Endothelial cell of umbilical vein (primary cell): ENCODE measurements at regions of chr2 and their contacts with region 1.

Region 1: DNA sequence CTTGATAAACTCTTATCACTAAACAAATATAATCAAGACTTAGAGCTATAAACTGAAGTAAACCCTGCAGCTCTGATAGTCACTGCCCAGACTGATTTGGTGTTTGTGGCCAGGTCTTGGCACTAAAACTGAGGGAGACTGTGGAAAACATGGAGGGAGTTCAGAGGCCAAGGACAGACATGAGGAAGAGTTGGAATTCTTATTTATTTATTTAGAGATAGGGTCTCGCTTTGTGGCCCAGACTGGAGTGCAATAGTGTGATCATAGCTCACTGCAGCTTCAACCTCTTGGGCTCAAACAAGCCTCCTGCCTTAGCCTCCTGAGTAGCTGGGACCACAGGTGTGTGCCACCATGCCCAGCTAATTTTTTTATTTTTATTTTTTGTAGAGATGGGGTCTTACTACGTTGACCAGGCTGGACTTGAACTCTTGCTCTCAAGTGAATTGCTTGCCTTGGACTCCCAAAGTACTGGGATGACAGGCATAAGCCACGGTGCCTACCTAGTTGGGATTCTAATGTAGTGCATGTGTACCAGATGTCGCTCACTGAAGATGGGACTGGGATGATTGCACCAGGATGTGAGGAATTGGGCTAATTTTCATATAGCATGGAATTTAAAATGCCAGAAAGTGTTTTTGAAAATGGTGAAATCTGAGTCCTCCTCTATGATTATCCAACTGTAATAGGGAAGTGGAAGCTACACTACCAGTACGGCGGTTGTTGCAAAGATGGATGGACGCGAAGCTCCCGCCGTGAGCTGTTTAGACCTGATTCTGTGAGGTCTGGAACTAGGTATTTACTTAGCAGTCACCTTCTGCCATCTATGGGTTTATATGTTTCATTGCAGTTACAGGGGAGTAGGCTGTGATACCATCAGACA is 52.7 kb upstream of the CTLA4 start:
- DNase-seq: peak; percentile 78
- H3K4me3 ChIP-seq: no peak overlapping the region
- H3K27ac ChIP-seq: no peak overlapping the region
- H3K4me1 ChIP-seq: peaks cover 38% of the 10 kb centered on the region
- H3K27me3 ChIP-seq: peaks cover 3 to 5% of the 10 kb centered on the region in 2 experiments
- CTCF ChIP-seq: peak; percentile 52 to 68
- POLR2A ChIP-seq: no peak

Region 2: DNA sequence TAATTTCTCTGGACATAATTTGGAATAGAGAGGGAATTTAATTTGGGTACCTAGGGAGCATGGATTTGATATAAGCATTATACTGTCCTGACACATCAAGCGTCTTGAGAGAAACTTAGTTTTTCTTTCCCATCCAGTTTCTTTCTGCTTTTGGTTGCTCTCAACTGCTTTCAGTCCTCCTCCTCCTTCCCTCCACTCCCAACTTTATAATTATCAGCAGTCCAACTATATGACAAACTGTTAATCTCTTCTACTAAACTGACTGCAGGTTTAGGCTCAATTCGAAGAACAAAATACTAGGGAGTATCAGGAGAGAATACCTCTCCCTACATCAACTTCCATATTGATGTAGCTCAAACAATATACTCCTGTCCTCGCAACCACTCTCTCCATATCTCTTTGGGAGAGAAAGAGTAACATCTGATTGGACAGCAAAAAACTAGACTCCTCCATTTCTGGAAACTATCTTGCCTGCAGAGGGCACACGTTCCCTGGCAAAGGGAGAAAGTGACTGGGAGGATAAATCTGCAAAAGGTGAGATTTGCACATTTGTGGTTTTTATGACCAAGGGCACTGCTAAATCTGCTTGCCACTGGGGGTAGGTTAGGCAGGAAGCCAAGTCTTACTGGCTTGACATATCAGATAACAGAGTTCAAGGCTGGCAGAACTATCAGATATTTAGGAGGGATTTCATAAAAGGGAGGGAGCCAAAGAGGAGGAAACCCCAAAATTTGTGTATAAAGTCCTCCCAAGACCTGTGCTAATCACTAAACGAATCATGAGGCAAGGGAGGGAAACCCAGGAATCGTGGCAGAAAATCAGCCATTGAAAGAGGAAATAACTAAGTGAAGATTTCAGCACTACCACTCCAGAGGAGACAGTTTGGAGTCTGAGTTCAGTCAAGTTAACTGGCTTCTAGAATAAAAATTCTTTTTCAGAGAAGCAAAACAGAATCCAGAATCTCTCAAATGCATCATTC is 983.4 kb before region 1 on chr2:
- CTCF ChIA-PET with region 1: interaction called, 8 read pairs
- POLR2A ChIA-PET with region 1: no interaction called
- dilution Hi-C with region 1: no loop called
- intact Hi-C with region 1: loop called (anchors 2 kb)
- DNase-seq: peak; percentile 75
- H3K4me3 ChIP-seq: no peak overlapping the region
- H3K27ac ChIP-seq: no peak overlapping the region
- H3K4me1 ChIP-seq: peaks cover 15% of the 10 kb centered on the region
- H3K27me3 ChIP-seq: no peaks in the 10 kb centered on the region
- CTCF ChIP-seq: peak; percentile 56 to 61
- POLR2A ChIP-seq: no peak

Region 3: GRCh38 chr2:203280428-203281064 is 534.4 kb before region 1 on chr2:
- CTCF ChIA-PET with region 1: interaction called, 14 read pairs
- POLR2A ChIA-PET with region 1: no interaction called
- dilution Hi-C with region 1: no loop called
- intact Hi-C with region 1: loop called (anchors 1 kb)
- DNase-seq: peak; percentile 96
- H3K4me3 ChIP-seq: no peak overlapping the region
- H3K27ac ChIP-seq: peak overlapping the region; percentile 20
- H3K4me1 ChIP-seq: peaks cover 17% of the 10 kb centered on the region
- H3K27me3 ChIP-seq: no peaks in the 10 kb centered on the region
- CTCF ChIP-seq: no peak
- POLR2A ChIP-seq: no peak

Region 4: DNA sequence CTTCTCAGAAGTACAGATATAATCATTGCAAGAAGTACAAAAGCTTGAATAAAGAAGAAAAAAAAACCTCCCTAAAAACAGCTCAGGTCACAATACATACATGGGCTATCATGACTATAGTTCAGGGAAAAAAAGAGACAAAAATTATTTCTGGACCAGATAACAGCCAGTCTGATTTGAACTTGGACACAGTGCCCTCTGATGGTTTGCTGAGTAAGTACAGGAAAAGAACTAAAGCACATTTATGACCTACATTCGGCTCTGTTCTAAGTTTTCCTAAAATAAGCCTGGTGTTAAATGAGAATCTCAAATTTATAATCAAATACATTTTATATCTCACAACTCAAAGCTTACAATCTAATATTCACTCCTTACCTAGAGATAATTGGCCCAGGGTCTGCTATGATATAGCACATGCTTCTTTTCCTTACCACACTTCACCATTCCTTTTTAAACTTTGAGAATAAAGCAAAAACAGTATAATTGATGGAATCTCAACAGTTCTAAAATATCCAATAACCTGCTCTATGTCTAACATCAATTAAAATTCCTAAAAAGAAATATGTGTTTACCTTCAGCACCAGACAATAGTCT is 360.9 kb before region 1 on chr2:
- CTCF ChIA-PET with region 1: interaction called, 27 read pairs
- POLR2A ChIA-PET with region 1: no interaction called
- dilution Hi-C with region 1: no loop called
- intact Hi-C with region 1: loop called (anchors 1 kb)
- DNase-seq: peak; percentile 67
- H3K4me3 ChIP-seq: no peak overlapping the region
- H3K27ac ChIP-seq: no peak overlapping the region
- H3K4me1 ChIP-seq: no peaks in the 10 kb centered on the region
- H3K27me3 ChIP-seq: no peaks in the 10 kb centered on the region
- CTCF ChIP-seq: peak; percentile 49 to 58
- POLR2A ChIP-seq: no peak

Region 5: GRCh38 chr2:203484266-203485112 is 330.4 kb before region 1 on chr2:
- CTCF ChIA-PET with region 1: interaction called, 38 read pairs
- POLR2A ChIA-PET with region 1: no interaction called
- dilution Hi-C with region 1: no loop called
- intact Hi-C with region 1: loop called (anchors 1 kb)
- DNase-seq: peak; percentile 45
- H3K4me3 ChIP-seq: no peak overlapping the region
- H3K27ac ChIP-seq: no peak overlapping the region
- H3K4me1 ChIP-seq: no peaks in the 10 kb centered on the region
- H3K27me3 ChIP-seq: no peaks in the 10 kb centered on the region
- CTCF ChIP-seq: peak; percentile 23 to 51
- POLR2A ChIP-seq: no peak

Region 6: GRCh38 chr2:203650860-203651613 is 163.9 kb before region 1 on chr2:
- CTCF ChIA-PET with region 1: interaction called, 5 read pairs
- POLR2A ChIA-PET with region 1: no interaction called
- dilution Hi-C with region 1: no loop called
- intact Hi-C with region 1: loop called (anchors 10 kb)
- DNase-seq: peak; percentile 53
- H3K4me3 ChIP-seq: no peak overlapping the region
- H3K27ac ChIP-seq: no peak overlapping the region
- H3K4me1 ChIP-seq: no peaks in the 10 kb centered on the region
- H3K27me3 ChIP-seq: no peaks in the 10 kb centered on the region
- CTCF ChIP-seq: peak in 1 of 2 donors; percentile 4
- POLR2A ChIP-seq: no peak

Region 7: GRCh38 chr2:203909261-203909967 is 94.5 kb after region 1 on chr2:
- CTCF ChIA-PET with region 1: interaction called, 25 read pairs
- POLR2A ChIA-PET with region 1: no interaction called
- dilution Hi-C with region 1: no loop called
- intact Hi-C with region 1: loop called (anchors 1 kb)
- DNase-seq: peak; percentile 74
- H3K4me3 ChIP-seq: peak overlapping the region in 1 of 3 experiments; percentile 47
- H3K27ac ChIP-seq: no peak overlapping the region
- H3K4me1 ChIP-seq: peaks cover 8% of the 10 kb centered on the region
- H3K27me3 ChIP-seq: no peaks in the 10 kb centered on the region
- CTCF ChIP-seq: peak; percentile 57 to 59
- POLR2A ChIP-seq: no peak